ENCODE measurements at regions of chr19 and their contacts with region 1.

Region 1: DNA sequence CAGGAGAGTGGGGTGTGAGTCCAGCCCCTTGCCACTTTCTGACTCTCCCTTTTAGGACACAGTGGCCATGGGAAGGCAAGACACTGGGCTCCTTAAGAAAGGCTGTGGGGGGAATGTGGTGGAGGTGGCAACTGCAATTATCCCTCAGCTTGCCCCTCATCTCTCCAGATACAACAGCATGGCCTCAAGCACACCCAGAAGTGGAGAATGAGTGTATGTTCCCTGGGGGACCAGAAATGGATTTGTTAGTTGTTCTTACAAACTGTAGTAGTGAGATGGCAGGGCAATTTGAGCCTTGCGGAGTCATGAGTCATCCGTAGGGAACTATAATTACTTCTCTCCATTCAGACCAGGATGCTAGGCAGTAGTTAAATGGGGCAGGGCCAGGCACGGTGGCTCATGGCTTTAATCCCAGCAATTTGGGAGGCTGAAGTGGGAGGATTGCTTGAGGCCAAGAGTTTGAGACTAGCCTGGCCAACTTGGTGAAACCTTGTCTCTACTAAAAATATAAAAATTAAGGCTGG is 25.6 kb upstream of the CXCL17 start:
- DNase-seq: no peak
- ATAC-seq: no peak
- H3K4me3 ChIP-seq: no peak overlapping the region
- H3K4me3 Mint-ChIP-seq: no peak overlapping the region
- H3K27ac ChIP-seq: no peak overlapping the region
- H3K27ac Mint-ChIP-seq: no peak overlapping the region
- H3K4me1 ChIP-seq: peaks cover 38 to 48% of the 10 kb centered on the region in 2 donors
- H3K4me1 Mint-ChIP-seq: peaks cover 47% of the 10 kb centered on the region
- H3K27me3 ChIP-seq: no peaks in the 10 kb centered on the region
- H3K27me3 Mint-ChIP-seq: no peaks in the 10 kb centered on the region
- CTCF ChIP-seq: no peak

Region 2: GRCh38 chr19:42440357-42441048 is 27.8 kb before region 1 on chr19:
- CTCF ChIA-PET with region 1: interaction called, 16 read pairs
- POLR2A ChIA-PET with region 1: no interaction called
- intact Hi-C with region 1: no loop called
- DNase-seq: peak; percentile 83
- ATAC-seq: peak; percentile 57
- H3K4me3 ChIP-seq: no peak overlapping the region
- H3K4me3 Mint-ChIP-seq: no peak overlapping the region
- H3K27ac ChIP-seq: no peak overlapping the region
- H3K27ac Mint-ChIP-seq: no peak overlapping the region
- H3K4me1 ChIP-seq: peaks cover 0 to 7% of the 10 kb centered on the region in 2 donors
- H3K4me1 Mint-ChIP-seq: peaks cover 8% of the 10 kb centered on the region
- H3K27me3 ChIP-seq: peaks cover 0 to 5% (median 0%) of the 10 kb centered on the region in 4 experiments
- H3K27me3 Mint-ChIP-seq: peaks cover 16% of the 10 kb centered on the region
- CTCF ChIP-seq: peak; percentile 96

Region 3: DNA sequence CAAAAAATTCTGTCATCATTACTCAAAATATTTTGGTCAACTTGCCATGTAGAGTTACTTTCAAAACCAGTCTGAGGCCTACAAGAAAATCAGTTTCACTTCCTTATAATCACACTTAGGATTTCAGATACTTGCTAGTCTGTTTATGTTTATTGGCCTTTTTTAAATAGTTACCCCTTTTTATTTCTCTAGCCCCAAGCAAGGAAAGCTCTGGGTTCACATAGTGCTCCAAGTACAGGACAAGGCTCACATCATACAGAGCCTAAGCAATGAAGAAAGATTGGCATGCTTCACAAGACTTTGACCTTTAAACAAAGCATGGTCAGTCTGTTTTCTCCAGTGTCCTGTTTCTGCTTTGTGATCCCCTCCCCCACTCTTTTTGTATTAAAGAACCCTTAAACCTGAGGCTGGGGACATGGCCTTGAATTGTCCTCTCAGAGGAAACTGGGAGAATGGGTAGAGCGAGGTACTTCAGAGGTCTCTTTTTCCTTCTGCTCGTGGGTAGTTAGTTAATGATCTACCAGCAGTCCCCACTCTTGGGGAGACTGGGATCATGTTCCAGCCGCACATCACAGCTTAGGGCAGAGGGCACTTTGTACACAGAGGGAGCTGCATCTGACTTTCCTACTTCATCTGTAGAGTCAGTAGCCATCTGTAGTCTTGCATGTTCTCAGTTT is 29.3 kb after region 1 on chr19:
- CTCF ChIA-PET with region 1: interaction called, 29 read pairs
- POLR2A ChIA-PET with region 1: interaction called, 3 read pairs
- intact Hi-C with region 1: loop called (anchors 1 kb)
- DNase-seq: peak; percentile 68
- ATAC-seq: peak; percentile 73
- H3K4me3 ChIP-seq: peak overlapping the region in 1 of 5 experiments; percentile 18
- H3K4me3 Mint-ChIP-seq: peak overlapping the region; percentile 40
- H3K27ac ChIP-seq: peak overlapping the region; percentile 56 to 77
- H3K27ac Mint-ChIP-seq: peak overlapping the region; percentile 93
- H3K4me1 ChIP-seq: peaks cover 27% of the 10 kb centered on the region in 2 donors
- H3K4me1 Mint-ChIP-seq: peaks cover 30% of the 10 kb centered on the region
- H3K27me3 ChIP-seq: no peaks in the 10 kb centered on the region
- H3K27me3 Mint-ChIP-seq: no peaks in the 10 kb centered on the region
- CTCF ChIP-seq: no peak